ENCODE measurements at regions of chr11 and their contacts with region 1.

Region 1: DNA sequence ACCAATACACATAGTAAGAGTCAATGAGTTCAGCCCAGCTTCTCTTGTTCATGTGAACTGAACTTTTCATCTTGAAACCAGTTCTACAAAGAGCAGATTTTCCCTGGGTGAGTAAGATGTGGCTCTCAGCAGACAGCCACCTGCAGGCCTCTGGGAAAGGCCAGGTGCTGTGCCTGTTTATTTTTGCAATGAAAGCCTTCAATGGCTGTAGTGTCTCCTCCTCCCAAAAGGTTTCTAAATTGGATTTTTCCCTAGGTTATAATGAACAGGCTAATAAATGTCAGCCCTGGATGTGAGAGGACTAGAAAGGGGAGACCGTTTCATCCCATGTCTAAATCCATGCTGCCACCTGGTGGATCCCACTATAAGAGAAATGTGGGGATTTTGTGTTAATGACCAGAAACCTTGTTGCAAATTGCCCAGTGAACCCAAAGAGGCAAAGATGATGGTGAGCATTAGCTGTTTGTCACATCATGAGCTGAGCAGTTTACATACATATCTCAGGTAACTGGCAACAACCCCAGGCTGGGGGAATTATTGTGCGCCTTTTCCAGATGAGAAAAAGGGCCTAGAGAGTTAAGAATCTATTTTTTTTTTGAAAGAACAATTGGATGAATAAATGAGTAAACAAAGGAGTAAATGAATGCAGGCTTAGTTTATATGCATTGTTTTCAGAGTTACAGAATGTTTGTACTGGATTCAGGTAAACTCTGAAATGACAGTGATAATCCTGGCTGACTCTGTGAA is 12.7 kb downstream of the C11orf91 start:
- DNase-seq: peak; percentile 53
- CTCF ChIP-seq: peak; percentile 45

Region 2: DNA sequence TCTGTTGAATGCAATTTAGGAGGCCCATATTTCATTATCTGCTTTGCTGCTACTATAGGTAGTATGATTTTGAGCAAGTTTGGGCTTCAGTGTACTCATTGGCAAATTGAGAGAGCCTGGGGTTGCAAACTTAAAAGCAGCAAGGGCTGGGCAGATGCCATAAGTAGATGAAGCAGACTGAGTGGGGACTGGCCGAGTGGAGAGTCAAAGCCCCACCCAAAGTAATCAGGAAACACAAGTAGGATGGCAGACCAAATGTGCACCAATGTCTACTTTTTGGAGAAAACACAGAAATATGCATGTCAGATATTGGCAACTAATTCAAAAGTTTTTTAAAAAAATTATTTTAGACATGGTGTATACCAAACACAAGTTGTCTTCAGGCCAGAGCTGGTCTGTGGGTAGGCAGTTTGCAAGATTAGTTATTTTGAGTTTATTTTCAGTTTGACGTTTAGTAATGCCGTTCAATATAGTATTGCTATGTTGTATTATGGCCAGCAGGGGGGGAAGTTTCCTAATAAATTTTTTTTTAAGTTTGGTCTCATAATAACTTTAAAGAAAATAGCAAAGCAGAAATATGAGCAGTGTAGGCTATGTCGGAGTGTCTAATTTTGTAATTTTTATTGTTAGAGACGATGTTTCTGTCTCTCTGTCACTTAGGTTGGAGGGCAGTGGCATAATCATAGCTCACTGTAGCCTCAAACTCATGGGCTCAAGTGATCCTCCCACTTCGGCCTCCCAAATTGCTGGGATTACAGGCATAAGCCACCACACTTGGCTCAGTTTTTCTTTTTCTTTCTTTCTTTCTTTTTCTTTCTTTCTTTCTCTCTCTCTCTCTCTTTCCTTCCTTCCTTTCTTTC is 325.6 kb before region 1 on chr11:
- CTCF ChIA-PET with region 1: interaction called, 21 read pairs
- POLR2A ChIA-PET with region 1: no interaction called
- DNase-seq: peak; percentile 45
- CTCF ChIP-seq: peak; percentile 45

Region 3: DNA sequence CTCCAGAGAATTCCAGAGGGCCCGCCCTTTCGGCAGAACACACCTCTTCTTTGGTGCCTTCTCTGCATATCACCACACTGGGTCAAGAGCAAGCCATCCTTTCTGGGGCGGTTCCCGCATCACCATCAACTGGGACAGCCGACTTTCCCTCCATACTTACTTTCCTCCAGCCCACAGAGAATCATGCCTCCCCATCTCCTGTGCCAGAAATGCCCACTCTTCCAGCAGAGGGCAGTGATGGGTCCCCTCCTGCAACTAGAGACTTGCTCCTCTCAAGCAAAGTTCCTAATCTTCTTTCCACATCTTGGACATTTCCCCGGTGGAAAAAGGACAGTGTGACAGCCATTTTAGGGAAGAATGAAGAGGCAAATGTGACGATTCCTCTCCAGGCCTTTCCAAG is 145.0 kb before region 1 on chr11:
- CTCF ChIA-PET with region 1: interaction called, 19 read pairs
- POLR2A ChIA-PET with region 1: no interaction called
- DNase-seq: peak; percentile 64
- CTCF ChIP-seq: peak; percentile 58

Region 4: DNA sequence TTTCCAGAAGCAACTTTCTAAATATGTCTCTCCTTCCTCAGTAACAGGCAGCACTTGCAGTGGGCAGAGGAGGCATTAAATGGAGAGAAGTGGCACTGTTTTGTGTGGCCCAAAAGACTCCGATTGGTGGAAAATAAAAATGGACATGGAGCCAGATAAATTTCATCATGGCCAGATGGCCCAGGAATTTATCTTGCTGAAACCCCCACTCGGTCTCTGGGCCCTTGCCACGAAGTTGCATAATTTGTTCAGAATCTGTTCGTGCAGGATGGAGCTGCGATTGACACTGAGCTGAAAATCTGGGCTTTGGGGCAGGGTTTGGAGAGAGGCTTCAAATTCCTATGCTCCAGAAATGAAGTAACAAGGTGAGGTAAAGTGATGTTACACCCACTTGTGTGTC is 52.7 kb before region 1 on chr11:
- CTCF ChIA-PET with region 1: no interaction called
- POLR2A ChIA-PET with region 1: no interaction called
- DNase-seq: no peak
- CTCF ChIP-seq: no peak

Region 5: GRCh38 chr11:33663121-33663520 is 24.8 kb before region 1 on chr11:
- CTCF ChIA-PET with region 1: interaction called, 11 read pairs
- POLR2A ChIA-PET with region 1: no interaction called
- DNase-seq: no peak
- CTCF ChIP-seq: no peak

Region 6: DNA sequence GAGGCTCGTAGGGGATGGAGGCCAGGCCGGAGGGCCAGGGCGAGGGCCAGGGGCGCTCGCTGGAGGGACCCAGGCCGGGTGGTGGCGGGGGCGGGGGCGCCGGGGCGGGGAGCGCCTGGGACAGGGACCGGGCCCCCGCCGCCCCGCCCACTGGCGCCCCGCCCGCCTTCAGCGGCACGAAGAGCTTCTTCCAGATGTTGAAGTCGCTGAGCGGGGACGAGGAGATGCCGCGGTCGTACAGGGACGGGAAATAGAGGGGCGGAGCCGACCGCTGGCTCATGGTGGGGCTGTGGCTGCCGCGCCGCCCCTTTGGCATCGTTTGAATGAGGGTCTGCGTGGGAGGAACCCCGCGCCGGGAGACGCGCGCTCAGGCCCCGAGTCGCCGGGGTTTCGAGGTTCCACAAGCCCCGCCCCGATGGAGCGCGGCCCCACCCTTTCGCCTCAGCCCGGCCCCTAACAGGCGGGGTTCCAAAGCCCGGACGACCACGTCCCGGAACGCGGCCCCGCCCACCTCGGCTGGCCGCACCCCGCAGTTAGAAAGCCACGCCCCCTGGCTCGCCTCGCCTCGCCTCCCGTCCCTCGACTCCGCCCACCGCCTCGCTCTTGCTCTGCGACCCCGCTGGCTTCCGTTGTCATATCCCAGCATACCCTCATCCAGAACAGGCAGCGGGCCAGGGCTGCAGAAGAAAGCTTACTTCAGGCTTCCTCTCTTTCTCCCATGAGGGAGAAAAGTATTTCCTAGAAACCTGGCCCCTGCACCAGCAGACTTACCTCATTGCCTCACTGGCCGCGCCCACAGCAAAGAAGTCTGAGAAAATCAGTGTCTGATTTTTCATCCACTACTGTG is 12.7 kb after region 1 on chr11 and contains the start of gene C11orf91:
- CTCF ChIA-PET with region 1: interaction called, 17 read pairs
- POLR2A ChIA-PET with region 1: no interaction called
- DNase-seq: peak; percentile 97
- CTCF ChIP-seq: no peak

Region 7: DNA sequence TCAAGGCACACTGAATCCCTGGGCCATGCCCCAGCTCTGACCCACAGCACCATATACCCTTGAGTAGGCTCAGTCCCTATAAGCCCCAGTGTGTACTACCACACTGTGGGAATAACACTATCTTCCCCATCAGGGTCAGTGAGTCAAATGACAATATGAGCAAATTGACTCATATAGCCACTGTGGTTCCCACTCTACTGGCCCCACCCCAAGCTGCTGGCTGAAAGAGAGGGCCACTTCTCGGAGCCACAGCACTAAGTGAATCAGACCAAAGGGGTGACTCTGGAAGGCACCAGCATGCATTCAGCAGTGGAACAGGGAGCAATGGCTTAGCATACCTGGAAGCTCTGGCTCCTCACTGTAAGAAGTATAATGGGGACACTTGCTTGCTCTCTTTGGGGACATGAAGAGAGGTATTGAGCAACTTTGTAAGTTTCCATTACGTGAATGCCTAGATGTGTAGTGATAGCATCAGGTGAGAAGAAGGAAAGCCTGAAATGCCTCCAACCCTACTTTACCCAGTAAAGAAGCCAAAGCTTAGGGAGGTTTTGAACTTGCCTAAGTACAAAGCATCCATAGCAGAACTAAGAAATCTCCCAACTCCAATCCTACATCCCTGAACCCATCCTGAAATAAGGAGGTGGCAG is 34.8 kb after region 1 on chr11:
- CTCF ChIA-PET with region 1: no interaction called
- POLR2A ChIA-PET with region 1: no interaction called
- DNase-seq: peak; percentile 72
- CTCF ChIP-seq: no peak